HEK293 (cell line): ENCODE measurements at regions of chr22 and their contacts with region 1.

Region 1: DNA sequence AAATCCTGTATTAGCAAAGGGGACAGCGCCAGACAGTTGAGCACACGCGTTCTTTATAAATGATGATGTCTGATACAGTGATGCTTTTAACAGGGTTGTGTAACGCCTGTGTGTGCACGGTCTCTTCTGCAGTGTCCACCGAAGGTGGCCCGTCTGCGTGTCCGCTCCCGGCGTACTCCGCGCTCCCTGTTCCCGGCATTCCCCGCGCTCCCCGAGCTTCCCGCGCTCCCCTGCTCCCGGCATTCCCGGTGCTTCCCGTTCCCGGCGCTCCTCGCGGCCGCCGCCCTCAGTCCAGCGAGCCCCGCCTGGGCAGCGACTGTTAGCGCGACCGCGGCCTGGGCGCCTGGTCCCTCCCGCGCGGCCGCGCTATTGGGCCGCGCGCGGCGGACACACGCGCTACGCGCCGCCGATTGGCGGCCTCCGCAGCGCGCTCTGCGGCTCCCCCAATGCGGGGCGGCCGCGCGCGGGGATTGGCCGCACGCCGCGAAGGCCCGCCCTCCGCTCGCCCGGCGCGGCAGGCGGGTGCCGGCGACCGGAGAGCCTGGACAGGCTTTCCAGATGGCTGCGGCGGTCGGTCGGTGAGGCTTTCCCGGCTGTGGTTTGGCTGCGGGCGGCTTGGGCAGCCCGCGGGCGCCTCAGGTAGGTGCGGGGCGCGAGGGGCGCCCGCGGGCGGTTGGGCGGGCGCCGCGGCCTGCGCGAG is at the start of gene DGCR8:
- H3K4me3 ChIP-seq: peak within 1 kb of the TSS; percentile 92
- H3K27ac ChIP-seq: peak within 1 kb of the TSS; percentile 94
- H3K4me1 ChIP-seq: no peaks in the 10 kb centered on the region; the same call in 1 of the 2 replicates
- CTCF ChIP-seq: no peak

Region 2: DNA sequence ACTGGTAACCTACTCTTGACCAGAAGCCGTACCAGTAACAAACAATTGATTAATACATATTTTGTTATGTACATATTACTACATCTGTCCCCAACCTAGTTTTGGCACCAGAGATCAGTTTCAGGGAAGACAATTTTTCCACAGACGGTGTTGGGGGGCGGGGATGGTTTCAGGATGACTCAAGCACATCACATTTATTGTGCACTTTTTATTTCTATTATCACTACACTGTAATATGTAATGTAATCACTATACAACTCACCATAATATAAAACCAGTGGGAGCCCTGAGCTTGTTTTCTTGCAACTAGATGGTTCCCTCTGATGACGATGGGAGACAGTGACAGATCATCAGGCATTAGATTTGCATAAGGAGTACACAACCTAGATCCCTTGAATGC is 15.6 kb after region 1 on chr22:
- CTCF ChIA-PET with region 1: interaction called, 11 read pairs
- POLR2A ChIA-PET with region 1: interaction called, 3 read pairs
- H3K4me3 ChIP-seq: no peak overlapping the region
- H3K27ac ChIP-seq: no peak overlapping the region
- H3K4me1 ChIP-seq: no peaks in the 10 kb centered on the region
- CTCF ChIP-seq: no peak

Region 3: GRCh38 chr22:20116951-20117645 is 37.2 kb after region 1 on chr22 and contains the start of gene TRMT2A:
- CTCF ChIA-PET with region 1: interaction called, 4 read pairs
- POLR2A ChIA-PET with region 1: interaction called, 13 read pairs
- H3K4me3 ChIP-seq: peak within 1 kb of the TSS; percentile 93
- H3K27ac ChIP-seq: peak within 1 kb of the TSS; percentile 88
- H3K4me1 ChIP-seq: no peaks in the 10 kb centered on the region
- CTCF ChIP-seq: peak; percentile 68